ENCODE measurements at regions of chr2 and their contacts with region 1.

Region 1: DNA sequence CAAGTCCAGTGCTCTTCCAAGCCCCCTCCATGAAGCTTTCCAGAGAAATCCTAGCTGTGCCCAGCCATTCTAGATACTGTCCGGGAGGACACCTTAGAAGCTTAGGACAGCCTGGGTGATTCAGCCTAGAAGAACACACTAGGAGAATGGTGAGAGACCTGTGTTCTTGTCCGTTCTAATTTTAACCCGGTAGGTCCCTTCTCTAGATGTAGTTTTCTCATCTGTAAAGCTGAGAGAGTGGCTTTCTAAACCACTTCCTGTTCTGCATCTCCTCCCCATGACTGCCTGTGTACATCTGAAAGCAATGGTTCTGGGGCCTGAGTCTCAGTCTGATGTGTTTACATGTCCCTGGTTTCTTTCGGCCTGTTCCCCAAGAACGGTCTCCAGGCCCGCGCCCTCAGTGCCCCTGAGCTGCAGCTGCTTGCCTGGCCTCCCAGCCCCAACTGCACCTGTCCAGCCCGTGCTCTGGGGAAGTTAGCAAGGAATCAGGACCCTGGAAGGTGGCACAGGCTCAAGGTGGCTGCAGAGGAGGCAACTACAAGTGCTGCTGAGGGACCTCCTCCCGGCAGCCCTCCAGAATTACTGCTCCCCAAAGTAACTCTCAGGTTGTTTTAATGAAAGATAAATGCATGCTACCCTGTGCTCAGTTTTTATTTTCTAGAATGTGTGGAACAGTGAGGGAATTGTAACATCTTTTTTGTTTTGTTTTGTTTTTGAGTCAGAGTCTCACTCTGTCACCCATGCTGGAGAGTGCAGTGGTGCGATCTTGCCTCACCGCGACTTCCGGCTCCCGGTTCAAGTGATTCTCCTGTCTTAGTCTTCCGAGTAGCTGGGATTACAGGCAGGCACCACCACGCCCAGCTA is 105.9 kb downstream of the LBH start:
- DNase-seq: peak; percentile 90
- H3K4me3 ChIP-seq: peak overlapping the region; percentile 48
- H3K27ac ChIP-seq: peak overlapping the region; percentile 87
- H3K4me1 ChIP-seq: peaks cover 37% of the 10 kb centered on the region
- CTCF ChIP-seq: no peak

Region 2: GRCh38 chr2:30139131-30139870 is 197.9 kb before region 1 on chr2:
- CTCF ChIA-PET with region 1: no interaction called
- POLR2A ChIA-PET with region 1: no interaction called
- intact Hi-C with region 1: no loop called
- DNase-seq: peak; percentile 87
- H3K4me3 ChIP-seq: peak overlapping the region; percentile 45
- H3K27ac ChIP-seq: peak overlapping the region; percentile 87
- H3K4me1 ChIP-seq: peaks cover 31% of the 10 kb centered on the region
- CTCF ChIP-seq: no peak; the same call in 1 of the 2 replicates

Region 3: DNA sequence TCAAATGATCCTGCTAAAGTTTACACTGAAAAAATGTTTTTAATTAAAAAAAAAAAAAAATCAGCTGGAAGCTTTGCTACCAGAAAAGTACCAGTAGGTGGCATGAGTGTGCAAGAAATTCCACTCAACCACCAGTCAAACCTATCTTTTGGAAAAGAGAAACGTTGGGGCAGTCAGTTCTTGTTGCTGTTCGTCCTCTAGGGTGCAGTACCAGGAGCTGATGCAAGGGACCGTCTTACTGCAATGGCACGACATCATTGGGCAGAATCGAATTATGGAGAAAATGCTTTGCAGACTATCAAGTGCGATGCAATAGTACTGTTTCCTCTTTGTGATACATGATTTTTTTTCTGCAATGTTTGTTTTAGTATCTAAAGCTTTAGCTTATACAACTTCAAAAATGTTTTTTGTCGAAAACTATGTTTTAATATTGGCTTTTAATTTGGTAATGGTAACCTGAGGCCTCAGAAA is 172.1 kb before region 1 on chr2:
- CTCF ChIA-PET with region 1: no interaction called
- POLR2A ChIA-PET with region 1: interaction called, 3 read pairs
- intact Hi-C with region 1: loop called (anchors 2 kb)
- DNase-seq: peak; percentile 92
- H3K4me3 ChIP-seq: no peak overlapping the region
- H3K27ac ChIP-seq: no peak overlapping the region
- H3K4me1 ChIP-seq: peaks cover 22% of the 10 kb centered on the region
- CTCF ChIP-seq: peak; percentile 99

Region 4: GRCh38 chr2:30239308-30239985 is 97.8 kb before region 1 on chr2:
- CTCF ChIA-PET with region 1: interaction called, 9 read pairs
- POLR2A ChIA-PET with region 1: no interaction called
- intact Hi-C with region 1: loop called (anchors 1 kb)
- DNase-seq: peak; percentile 78
- H3K4me3 ChIP-seq: no peak overlapping the region
- H3K27ac ChIP-seq: no peak overlapping the region
- H3K4me1 ChIP-seq: no peaks in the 10 kb centered on the region
- CTCF ChIP-seq: peak; percentile 92

Region 5: GRCh38 chr2:30293303-30293921 is 43.8 kb before region 1 on chr2:
- CTCF ChIA-PET with region 1: no interaction called
- POLR2A ChIA-PET with region 1: interaction called, 17 read pairs
- intact Hi-C with region 1: loop called (anchors 1 kb)
- DNase-seq: no peak
- H3K4me3 ChIP-seq: no peak overlapping the region
- H3K27ac ChIP-seq: no peak overlapping the region
- H3K4me1 ChIP-seq: peaks cover 22% of the 10 kb centered on the region
- CTCF ChIP-seq: no peak

Region 6: GRCh38 chr2:30447149-30448045 is 110.2 kb after region 1 on chr2 and contains the start of gene LCLAT1:
- CTCF ChIA-PET with region 1: no interaction called
- POLR2A ChIA-PET with region 1: interaction called, 10 read pairs
- intact Hi-C with region 1: loop called (anchors 2 kb)
- DNase-seq: peak; percentile 88
- H3K4me3 ChIP-seq: peak within 1 kb of the TSS; percentile 89
- H3K27ac ChIP-seq: peak within 1 kb of the TSS; percentile 36
- H3K4me1 ChIP-seq: peaks cover 14% of the 10 kb centered on the region
- CTCF ChIP-seq: no peak
- total RNA-seq, gene LCLAT1: 9.2 and 11.5 TPM in 2 replicates